ENCODE measurements at regions of chr10 and their contacts with region 1.

Region 1: GRCh38 chr10:44959247-44960087 is at the start of gene RASSF4:
- DNase-seq: peak; percentile 96
- ATAC-seq: peak; percentile 100
- H3K4me3 Mint-ChIP-seq: peak within 1 kb of the TSS; percentile 80
- H3K27ac Mint-ChIP-seq: peak within 1 kb of the TSS; percentile 70
- H3K4me1 Mint-ChIP-seq: peaks cover 19% of the 10 kb centered on the region
- H3K27me3 Mint-ChIP-seq: no peaks in the 10 kb centered on the region
- total RNA-seq, gene RASSF4: 1.0 to 1.3 TPM

Region 2: DNA sequence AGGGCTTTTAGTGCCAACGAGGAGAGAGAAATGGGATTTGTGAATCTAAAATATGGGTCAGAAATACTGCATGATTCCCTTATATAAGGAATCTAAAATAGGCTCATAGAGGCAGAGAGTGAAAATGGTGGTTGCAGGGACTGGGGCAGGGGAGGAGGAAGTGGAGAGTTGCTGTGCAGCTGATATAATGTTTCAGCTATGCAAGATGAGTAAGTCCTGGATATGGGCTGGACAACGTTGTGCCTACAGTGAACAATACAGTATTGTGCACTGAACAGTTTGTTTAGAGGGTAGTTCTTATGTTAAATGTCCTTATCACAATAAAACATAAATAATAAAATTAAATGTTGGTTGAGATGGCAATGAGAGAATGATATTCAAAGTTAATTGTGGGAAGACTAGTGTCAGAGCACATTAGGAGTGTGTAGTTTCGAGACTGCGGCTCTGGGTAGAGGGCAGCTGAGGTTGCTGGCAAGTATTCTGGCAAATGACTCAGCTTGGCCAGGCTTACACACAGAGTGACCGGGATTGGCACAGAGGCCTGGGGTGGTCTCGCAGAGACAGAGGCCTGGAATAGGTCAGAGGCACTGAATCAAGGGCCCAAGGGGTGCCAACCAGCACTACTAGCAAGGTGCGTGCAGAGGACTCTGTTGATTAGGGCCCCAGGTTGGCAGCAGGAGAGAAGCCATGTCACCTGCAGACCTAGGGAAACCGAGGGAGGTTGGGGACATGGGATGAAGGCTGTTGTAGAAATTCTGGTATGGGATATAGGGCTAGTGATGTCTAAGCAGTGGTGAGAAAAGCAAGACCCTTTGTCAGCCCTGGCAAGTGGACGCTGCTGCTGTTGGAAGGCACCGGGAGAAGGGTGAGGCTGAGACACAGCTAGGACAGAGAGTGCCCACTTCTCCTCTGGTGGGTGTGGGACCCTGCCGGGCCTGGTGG is 22.0 kb after region 1 on chr10:
- CTCF ChIA-PET with region 1: no interaction called
- POLR2A ChIA-PET with region 1: no interaction called
- intact Hi-C with region 1: no loop called
- DNase-seq: no peak
- ATAC-seq: peak; percentile 37
- H3K4me3 Mint-ChIP-seq: no peak overlapping the region
- H3K27ac Mint-ChIP-seq: no peak overlapping the region
- H3K4me1 Mint-ChIP-seq: peaks cover 3% of the 10 kb centered on the region
- H3K27me3 Mint-ChIP-seq: no peaks in the 10 kb centered on the region

Region 3: GRCh38 chr10:45000752-45001380 is 41.4 kb after region 1 on chr10 and contains the start of gene ZNF22:
- CTCF ChIA-PET with region 1: no interaction called
- POLR2A ChIA-PET with region 1: no interaction called
- intact Hi-C with region 1: loop called (anchors 1 to 2 kb)
- DNase-seq: peak; percentile 78
- ATAC-seq: peak; percentile 74
- H3K4me3 Mint-ChIP-seq: peak within 1 kb of the TSS; percentile 84
- H3K27ac Mint-ChIP-seq: peak within 1 kb of the TSS; percentile 89
- H3K4me1 Mint-ChIP-seq: peaks cover 24% of the 10 kb centered on the region
- H3K27me3 Mint-ChIP-seq: no peaks in the 10 kb centered on the region
- total RNA-seq, gene ZNF22: 18.8 to 21.6 TPM

Region 4: DNA sequence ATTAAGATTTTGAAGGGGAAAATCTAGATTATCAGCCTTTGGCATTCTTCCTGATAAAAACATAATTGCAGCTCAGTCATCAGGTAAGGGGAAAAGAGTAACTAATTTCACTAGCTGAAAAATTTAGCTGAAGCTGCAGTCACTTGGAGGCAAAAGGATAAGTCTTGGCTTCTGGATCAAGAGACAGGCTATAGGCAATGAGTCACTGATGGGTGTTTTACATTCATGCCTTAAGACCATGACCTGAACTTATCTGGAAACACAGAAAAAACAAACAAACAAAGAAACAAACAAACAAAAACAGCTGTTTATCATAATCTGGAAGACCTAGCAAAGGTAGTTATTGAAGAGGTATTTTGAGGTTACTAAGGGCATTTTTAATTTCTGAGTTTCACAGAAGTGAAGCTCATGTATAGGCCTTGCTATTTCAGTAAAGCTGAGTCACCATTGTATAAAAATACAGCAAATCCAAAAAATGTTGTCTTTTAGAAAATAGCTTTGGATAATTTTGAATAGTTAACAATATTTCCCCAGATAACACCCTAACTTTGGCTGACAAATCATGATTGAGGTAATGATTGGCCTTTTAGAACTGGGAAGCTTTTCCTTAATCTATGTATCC is 81.6 kb after region 1 on chr10:
- CTCF ChIA-PET with region 1: no interaction called
- POLR2A ChIA-PET with region 1: no interaction called
- intact Hi-C with region 1: no loop called
- DNase-seq: no peak
- ATAC-seq: no peak
- H3K4me3 Mint-ChIP-seq: no peak overlapping the region
- H3K27ac Mint-ChIP-seq: no peak overlapping the region
- H3K4me1 Mint-ChIP-seq: no peaks in the 10 kb centered on the region
- H3K27me3 Mint-ChIP-seq: peaks cover 6% of the 10 kb centered on the region

Measured in activated CD4-positive, alpha-beta T cell treated with anti-CD3 and anti-CD28 coated beads for 36 hours (primary cell).